T-cell (primary cell): ENCODE measurements at regions of chr7 and their contacts with region 1.

Region 1: DNA sequence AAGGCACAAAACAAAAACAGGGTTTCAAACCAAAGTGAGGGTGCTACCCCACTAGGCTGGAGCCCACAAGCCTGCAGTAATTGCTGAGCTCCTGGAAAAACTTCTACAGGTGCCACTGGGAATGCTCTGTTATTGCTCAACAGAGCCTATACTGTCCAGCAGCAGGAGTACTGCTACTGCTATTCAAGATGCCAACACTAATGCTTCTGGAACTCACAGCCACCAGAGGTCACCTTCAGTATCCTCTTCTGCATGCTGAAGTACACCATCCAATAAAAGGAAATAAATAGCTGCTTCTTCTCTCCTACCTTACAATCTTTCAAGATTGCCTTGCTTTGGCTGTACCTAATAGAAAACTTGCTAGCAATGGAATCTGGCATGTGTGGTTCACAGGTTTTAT is 222.0 kb downstream of the LRRN3 start:
- DNase-seq: no peak
- ATAC-seq: no peak
- H3K4me3 ChIP-seq: no peak overlapping the region
- H3K4me3 Mint-ChIP-seq: no peak overlapping the region
- H3K27ac ChIP-seq: no peak overlapping the region
- H3K27ac Mint-ChIP-seq: no peak overlapping the region
- H3K4me1 ChIP-seq: no peaks in the 10 kb centered on the region
- H3K4me1 Mint-ChIP-seq: no peaks in the 10 kb centered on the region
- H3K27me3 ChIP-seq: no peaks in the 10 kb centered on the region
- H3K27me3 Mint-ChIP-seq: no peaks in the 10 kb centered on the region

Region 2: DNA sequence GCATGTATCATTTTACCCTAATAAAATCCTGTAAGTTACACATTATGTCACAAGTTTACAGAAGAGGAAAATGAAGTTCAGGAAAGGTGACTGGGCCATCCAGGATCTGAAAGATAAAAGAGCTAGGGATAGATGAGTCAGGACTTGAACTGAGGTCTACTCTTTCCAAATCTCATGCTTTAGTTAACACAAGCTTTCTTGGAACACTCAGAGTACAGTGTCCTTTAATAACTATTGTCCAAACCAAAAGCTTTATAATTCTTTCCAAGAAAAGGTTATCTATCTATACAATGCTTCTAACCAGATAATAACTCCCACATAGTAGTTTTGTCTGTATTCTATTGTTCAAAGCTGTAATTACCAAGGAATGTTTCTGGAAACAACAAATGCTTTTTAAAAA is 57.4 kb before region 1 on chr7:
- CTCF ChIA-PET with region 1: interaction called in 1 of 2 experiments, 3 read pairs
- POLR2A ChIA-PET with region 1: interaction called in 1 of 2 experiments, 11 read pairs
- DNase-seq: no peak
- ATAC-seq: no peak
- H3K4me3 ChIP-seq: no peak overlapping the region
- H3K4me3 Mint-ChIP-seq: no peak overlapping the region
- H3K27ac ChIP-seq: no peak overlapping the region
- H3K27ac Mint-ChIP-seq: no peak overlapping the region
- H3K4me1 ChIP-seq: no peaks in the 10 kb centered on the region
- H3K4me1 Mint-ChIP-seq: no peaks in the 10 kb centered on the region
- H3K27me3 ChIP-seq: no peaks in the 10 kb centered on the region
- H3K27me3 Mint-ChIP-seq: no peaks in the 10 kb centered on the region